Mammary epithelial cell (primary cell): ENCODE measurements at regions of chr7 and their contacts with region 1.

Region 1: GRCh38 chr7:134547397-134548054 is 1.4 kb upstream of the AKR1B15 start:
- DNase-seq: peak; percentile 72
- H3K4me3 ChIP-seq: peak overlapping the region; percentile 36 to 45 (median 42)
- H3K27ac ChIP-seq: peak overlapping the region; percentile 70
- H3K4me1 ChIP-seq: peaks cover 22% of the 10 kb centered on the region
- H3K27me3 ChIP-seq: no peaks in the 10 kb centered on the region
- CTCF ChIP-seq: peak; percentile 82 to 86

Region 2: GRCh38 chr7:134448700-134449229 is 98.8 kb before region 1 on chr7:
- CTCF ChIA-PET with region 1: no interaction called
- dilution Hi-C with region 1: no loop called
- in situ Hi-C with region 1: no loop called
- intact Hi-C with region 1: no loop called
- DNase-seq: peak; percentile 90
- H3K4me3 ChIP-seq: no peak overlapping the region
- H3K27ac ChIP-seq: peak overlapping the region; percentile 89
- H3K4me1 ChIP-seq: peaks cover 40% of the 10 kb centered on the region
- H3K27me3 ChIP-seq: no peaks in the 10 kb centered on the region
- CTCF ChIP-seq: no peak

Region 3: DNA sequence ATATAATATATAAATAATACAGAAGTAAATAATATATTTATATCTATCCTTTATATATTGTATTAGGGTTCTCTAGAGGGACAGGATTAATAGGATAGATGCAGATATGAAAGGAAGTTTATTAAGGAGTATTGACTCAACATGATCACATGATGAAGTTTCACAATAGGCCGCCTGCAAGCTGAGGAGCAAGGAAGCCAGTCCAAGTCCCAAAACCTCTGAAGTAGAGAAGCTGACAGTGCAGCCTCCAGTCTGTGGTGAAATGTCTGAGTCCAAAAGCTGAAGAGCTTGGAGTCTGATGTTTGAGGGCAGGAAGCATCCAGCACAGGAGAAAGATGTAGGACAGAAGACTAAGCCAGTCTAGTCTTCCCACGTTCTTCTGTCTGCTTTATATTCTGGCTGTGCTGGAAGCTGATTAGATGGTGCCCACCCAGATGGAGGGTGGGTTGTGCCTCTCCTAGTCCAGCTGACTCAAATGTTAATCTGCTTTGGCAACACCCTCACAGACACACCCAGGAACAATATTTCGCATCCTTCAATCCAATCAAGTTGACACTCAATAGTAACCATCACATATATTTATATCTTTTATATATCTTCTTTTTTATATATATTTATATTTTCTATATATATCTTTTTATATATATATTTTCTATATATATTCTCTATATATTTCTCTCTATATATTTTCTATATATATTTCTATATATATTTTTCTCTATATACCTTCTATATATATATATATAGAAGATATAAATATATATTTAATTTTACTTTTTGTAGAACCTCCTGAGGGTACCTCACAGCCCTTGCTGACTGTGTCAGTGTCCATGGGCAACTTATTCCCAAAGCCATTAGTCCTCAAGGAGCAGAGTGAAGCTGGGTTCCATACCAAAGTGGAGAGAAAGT is 44.8 kb before region 1 on chr7:
- CTCF ChIA-PET with region 1: no interaction called
- dilution Hi-C with region 1: no loop called
- in situ Hi-C with region 1: no loop called
- intact Hi-C with region 1: no loop called
- DNase-seq: peak; percentile 58
- H3K4me3 ChIP-seq: no peak overlapping the region
- H3K27ac ChIP-seq: no peak overlapping the region
- H3K4me1 ChIP-seq: peaks cover 11% of the 10 kb centered on the region
- H3K27me3 ChIP-seq: no peaks in the 10 kb centered on the region
- CTCF ChIP-seq: no peak

Region 4: DNA sequence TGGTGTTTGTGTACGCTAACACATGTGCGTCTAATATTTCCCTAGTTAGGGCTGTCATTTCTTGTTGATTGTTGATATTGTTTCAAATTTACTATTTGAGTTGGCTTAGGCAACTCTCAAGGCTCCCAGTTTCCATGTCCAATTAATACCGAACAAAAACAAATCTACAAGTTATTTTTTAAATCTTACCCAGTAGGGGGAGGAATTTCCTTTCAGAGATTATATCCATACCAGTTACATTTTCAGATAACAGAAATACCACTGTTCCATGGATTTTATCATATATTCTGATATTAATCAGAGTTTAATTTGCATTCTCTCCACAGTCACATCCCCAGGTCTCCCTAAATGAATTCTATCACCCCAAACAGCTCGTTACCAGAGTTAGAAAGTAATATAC is 27.4 kb before region 1 on chr7:
- CTCF ChIA-PET with region 1: interaction called, 8 read pairs
- dilution Hi-C with region 1: no loop called
- in situ Hi-C with region 1: no loop called
- intact Hi-C with region 1: loop called (anchors 1 kb)
- DNase-seq: no peak
- H3K4me3 ChIP-seq: no peak overlapping the region
- H3K27ac ChIP-seq: no peak overlapping the region
- H3K4me1 ChIP-seq: peaks cover 21% of the 10 kb centered on the region
- H3K27me3 ChIP-seq: no peaks in the 10 kb centered on the region
- CTCF ChIP-seq: peak; percentile 2 to 30

Region 5: DNA sequence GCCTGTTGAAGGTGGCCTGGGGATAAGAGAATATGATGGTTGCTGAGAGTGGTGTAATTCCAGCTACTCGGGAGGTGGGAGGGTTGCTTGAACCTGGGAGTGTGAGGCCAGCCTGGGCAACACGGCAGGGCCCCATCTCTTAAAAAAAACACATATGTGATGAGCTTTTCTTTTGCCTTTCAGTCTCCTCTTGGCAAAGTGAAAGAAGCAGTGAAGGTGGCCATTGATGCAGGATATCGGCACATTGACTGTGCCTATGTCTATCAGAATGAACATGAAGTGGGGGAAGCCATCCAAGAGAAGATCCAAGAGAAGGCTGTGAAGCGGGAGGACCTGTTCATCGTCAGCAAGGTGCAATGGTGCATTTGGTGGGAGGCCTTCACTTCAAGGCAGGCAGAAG is 17.1 kb before region 1 on chr7:
- CTCF ChIA-PET with region 1: no interaction called
- dilution Hi-C with region 1: no loop called
- in situ Hi-C with region 1: no loop called
- intact Hi-C with region 1: no loop called
- DNase-seq: no peak
- H3K4me3 ChIP-seq: no peak overlapping the region
- H3K27ac ChIP-seq: no peak overlapping the region
- H3K4me1 ChIP-seq: peaks cover 50% of the 10 kb centered on the region
- H3K27me3 ChIP-seq: no peaks in the 10 kb centered on the region
- CTCF ChIP-seq: no peak

Region 6: DNA sequence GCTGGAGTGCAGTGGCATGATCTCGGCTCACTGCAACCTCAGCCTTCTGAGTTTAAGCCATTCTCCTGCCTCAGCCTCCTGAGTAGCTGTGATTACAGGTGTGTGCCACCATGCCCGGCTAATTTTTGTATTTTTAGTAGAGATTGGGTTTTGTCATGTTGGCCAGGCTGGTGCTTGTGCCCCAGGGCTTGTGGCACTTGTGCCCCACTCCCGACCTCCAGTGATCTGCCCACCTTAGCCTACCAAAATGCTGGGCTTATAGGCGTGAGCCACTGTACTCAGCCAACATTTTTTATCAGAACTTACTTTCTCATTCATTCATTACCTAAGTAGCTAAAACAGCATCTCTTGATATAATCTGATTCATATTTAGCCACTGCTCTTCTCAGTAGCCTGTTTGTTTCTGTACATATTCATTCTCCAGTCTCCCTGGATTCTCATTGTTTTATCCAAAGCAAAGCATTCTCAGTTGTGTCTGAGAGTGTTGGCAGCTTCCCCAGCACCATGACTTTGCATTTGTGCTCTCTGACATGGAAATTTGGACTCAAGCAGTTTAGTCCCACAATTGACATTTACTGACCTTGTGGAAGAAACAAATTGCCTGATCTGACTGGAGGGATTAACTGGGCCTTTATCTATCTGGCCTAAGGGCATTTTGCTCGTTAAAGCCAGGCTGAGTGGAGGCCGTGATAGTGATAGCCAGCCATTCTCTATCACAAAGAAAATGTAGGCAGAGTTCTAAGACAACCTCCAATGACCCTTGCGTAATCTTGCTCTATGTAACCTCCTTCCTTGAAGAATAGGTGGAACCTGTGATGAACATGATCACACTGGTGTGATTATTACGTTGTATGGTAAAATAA is 46.2 kb after region 1 on chr7:
- CTCF ChIA-PET with region 1: no interaction called
- dilution Hi-C with region 1: no loop called
- in situ Hi-C with region 1: no loop called
- intact Hi-C with region 1: loop called (anchors 5 kb)
- DNase-seq: peak; percentile 57
- H3K4me3 ChIP-seq: no peak overlapping the region
- H3K27ac ChIP-seq: peak overlapping the region; percentile 18
- H3K4me1 ChIP-seq: peaks cover 16% of the 10 kb centered on the region
- H3K27me3 ChIP-seq: no peaks in the 10 kb centered on the region
- CTCF ChIP-seq: no peak